ENCODE measurements at regions of chrX and their contacts with region 1.

Region 1: GRCh38 chrX:9942086-9942485 is 25.1 kb upstream of the CLDN34 start:
- DNase-seq: no peak
- ATAC-seq: no peak
- H3K4me3 ChIP-seq: no peak overlapping the region
- H3K27ac ChIP-seq: no peak overlapping the region
- H3K4me1 ChIP-seq: peaks cover 9% of the 10 kb centered on the region
- H3K27me3 ChIP-seq: no peaks in the 10 kb centered on the region
- CTCF ChIP-seq: no peak

Region 2: GRCh38 chrX:9644335-9644734 is 297.8 kb before region 1 on chrX:
- CTCF ChIA-PET with region 1: no interaction called
- POLR2A ChIA-PET with region 1: no interaction called
- intact Hi-C with region 1: no loop called
- DNase-seq: no peak
- ATAC-seq: no peak
- H3K4me3 ChIP-seq: no peak overlapping the region
- H3K27ac ChIP-seq: no peak overlapping the region
- H3K4me1 ChIP-seq: no peaks in the 10 kb centered on the region
- H3K27me3 ChIP-seq: no peaks in the 10 kb centered on the region
- CTCF ChIP-seq: no peak

Region 3: DNA sequence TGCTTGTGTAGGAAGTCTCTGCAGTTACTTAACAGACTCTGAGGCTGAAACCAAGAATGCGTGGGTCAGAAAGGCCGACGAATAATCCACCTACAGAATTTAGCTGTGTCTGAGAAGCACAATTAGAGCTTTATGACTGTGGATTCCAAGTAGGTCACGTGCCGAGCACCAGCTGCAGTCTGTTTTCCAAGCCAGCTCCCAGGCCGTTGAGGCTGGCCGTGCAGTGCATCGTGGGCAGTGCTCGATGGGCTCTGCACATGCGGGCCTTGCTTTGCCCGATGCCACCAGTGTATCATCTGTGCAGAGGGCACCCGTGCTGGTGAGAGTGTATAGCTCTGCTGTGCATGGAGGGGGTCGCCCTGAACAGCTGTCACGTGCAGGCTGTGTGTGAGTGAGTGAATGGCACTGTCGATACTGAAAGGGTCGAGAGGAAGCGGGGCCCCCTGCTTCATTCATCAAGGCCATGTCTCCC is 42.4 kb before region 1 on chrX:
- CTCF ChIA-PET with region 1: no interaction called
- POLR2A ChIA-PET with region 1: interaction called, 10 read pairs
- intact Hi-C with region 1: no loop called
- DNase-seq: no peak
- ATAC-seq: no peak
- H3K4me3 ChIP-seq: no peak overlapping the region
- H3K27ac ChIP-seq: no peak overlapping the region
- H3K4me1 ChIP-seq: peaks cover 26% of the 10 kb centered on the region
- H3K27me3 ChIP-seq: no peaks in the 10 kb centered on the region
- CTCF ChIP-seq: no peak